Left cardiac atrium (tissue), 4 donors: ENCODE measurements at regions of chr3 and their contacts with region 1.

Region 1: DNA sequence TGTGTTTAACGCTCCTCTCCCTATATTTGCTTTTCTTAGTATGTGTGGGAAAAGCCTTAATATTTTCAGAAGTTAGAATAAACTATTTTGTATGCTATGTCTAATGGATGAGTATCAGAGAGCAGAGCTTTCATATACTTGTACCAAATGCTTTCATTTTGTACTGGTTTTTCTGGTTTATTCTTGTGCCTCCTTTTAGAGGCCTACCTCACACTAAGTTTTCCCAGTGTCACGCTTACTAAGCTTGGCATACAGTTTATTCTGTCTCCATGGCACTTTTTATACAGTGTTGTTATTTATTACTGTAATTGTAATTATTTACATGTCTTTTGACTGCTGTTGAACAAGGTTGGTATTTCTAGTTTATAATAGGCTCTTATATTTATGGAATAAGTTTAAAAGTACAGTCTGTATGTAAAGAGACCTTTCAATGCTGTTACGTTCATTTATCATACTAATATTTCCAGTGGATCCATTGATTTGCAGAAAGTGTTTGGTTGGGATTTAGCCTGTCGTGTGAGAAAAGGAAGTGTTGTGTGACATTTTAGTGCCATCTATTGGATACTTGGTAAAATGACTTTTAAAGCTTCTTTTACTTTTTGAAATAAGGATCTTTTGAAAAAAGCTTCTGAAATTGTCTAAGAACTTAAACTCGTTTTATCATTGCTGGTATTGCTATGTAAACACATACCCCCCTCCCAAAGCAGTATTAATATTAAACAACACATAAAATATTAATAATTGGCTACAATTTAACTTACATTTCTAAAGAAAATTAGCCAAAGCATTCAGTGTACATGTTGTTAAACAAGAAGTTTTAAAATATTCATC is 5.2 kb upstream of the EBLN2 start:
- DNase-seq: no peak
- ATAC-seq: peak; percentile 34 to 48

Region 2: GRCh38 chr3:72938471-72939265 is 117.6 kb before region 1 on chr3:
- intact Hi-C with region 1: loop called (anchors 2 to 5 kb)
- DNase-seq: peak; percentile 60
- ATAC-seq: peak; percentile 92 to 96

Region 3: GRCh38 chr3:73018790-73019441 is 37.3 kb before region 1 on chr3:
- intact Hi-C with region 1: no loop called
- DNase-seq: no peak
- ATAC-seq: no peak